Astrocyte of the cerebellum (primary cell): ENCODE measurements at regions of chr7 and their contacts with region 1.

Region 1: GRCh38 chr7:18330548-18330947 is 165.0 kb upstream of the HDAC9 start:
- DNase-seq: no peak
- H3K4me3 ChIP-seq: no peak overlapping the region
- CTCF ChIP-seq: no peak

Region 2: DNA sequence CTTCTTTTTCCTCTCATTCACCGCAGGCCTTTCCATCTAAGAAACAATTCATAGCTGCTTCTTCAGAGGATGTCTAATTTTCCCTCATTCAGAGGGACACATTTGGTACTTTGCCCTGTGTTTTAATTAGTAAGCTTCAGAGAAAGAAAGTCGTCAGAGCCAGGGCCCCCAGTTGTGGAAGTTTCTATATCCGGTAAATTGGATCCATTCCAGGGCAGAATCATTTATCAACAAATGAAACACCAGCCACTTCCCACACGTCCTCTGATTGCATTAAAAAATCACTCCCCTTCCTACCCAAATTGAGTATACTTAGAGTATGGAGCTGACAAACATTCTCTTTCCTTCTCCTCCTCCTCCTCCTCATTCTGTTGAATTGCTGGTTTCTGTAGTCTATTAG is 40.8 kb before region 1 on chr7:
- in situ Hi-C with region 1: loop called (anchors 5 kb)
- DNase-seq: no peak
- H3K4me3 ChIP-seq: no peak overlapping the region
- CTCF ChIP-seq: no peak